ENCODE measurements at regions of chr9 and their contacts with region 1.

Region 1: DNA sequence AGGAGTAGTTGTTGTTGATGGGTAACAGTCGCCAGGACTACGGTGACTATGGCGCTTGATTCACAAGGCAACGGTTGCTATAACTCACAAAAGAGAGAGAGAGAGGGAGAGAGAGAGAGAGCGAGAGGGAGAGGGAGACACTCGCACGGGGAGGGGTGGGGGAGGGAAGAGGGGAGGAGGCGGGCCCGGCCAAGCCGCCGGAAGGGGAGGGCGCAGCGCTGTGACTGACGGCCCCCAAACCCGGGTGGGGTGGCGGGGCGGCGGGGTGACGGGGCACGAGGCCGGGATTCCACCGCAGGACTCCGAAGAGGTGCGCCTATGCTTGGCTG is at the start of gene RFX3:
- DNase-seq: peak; percentile 96
- H3K4me3 ChIP-seq: peak within 1 kb of the TSS; percentile 91
- H3K27ac ChIP-seq: peak within 1 kb of the TSS; percentile 100
- H3K4me1 ChIP-seq: peaks cover 50% of the 10 kb centered on the region
- H3K27me3 ChIP-seq: no peaks in the 10 kb centered on the region
- CTCF ChIP-seq: no peak
- total RNA-seq, gene RFX3: 7.4 and 11.6 TPM in 2 replicates

Region 2: GRCh38 chr9:2849941-2850340 is 675.9 kb before region 1 on chr9:
- CTCF ChIA-PET with region 1: no interaction called
- POLR2A ChIA-PET with region 1: no interaction called
- intact Hi-C with region 1: loop called (anchors 10 kb)
- DNase-seq: no peak
- H3K4me3 ChIP-seq: no peak overlapping the region
- H3K27ac ChIP-seq: no peak overlapping the region
- H3K4me1 ChIP-seq: no peaks in the 10 kb centered on the region
- H3K27me3 ChIP-seq: peaks cover 13% of the 10 kb centered on the region
- CTCF ChIP-seq: no peak

Region 3: DNA sequence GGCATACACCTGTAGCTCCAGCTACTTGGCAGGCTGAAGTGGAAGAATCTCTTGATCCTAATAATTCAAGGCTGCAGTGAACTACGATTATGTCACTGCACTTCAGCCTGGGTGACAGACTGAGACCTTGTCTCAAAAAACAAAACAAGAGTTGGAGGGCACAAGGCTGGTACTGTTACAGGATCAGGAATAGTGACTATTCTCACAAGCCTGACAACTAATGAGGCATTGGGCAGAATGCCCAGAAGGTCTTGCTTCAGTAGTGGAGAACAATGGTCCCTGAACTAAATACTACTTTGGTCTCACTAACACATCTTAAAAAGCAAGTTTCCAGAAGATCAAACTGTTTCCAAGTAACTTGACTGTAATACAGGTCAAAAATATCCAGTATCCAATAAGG is 183.0 kb after region 1 on chr9:
- CTCF ChIA-PET with region 1: no interaction called
- POLR2A ChIA-PET with region 1: no interaction called
- intact Hi-C with region 1: no loop called
- DNase-seq: peak; percentile 88
- H3K4me3 ChIP-seq: no peak overlapping the region
- H3K27ac ChIP-seq: no peak overlapping the region
- H3K4me1 ChIP-seq: no peaks in the 10 kb centered on the region
- H3K27me3 ChIP-seq: peaks cover 10% of the 10 kb centered on the region
- CTCF ChIP-seq: no peak

Region 4: DNA sequence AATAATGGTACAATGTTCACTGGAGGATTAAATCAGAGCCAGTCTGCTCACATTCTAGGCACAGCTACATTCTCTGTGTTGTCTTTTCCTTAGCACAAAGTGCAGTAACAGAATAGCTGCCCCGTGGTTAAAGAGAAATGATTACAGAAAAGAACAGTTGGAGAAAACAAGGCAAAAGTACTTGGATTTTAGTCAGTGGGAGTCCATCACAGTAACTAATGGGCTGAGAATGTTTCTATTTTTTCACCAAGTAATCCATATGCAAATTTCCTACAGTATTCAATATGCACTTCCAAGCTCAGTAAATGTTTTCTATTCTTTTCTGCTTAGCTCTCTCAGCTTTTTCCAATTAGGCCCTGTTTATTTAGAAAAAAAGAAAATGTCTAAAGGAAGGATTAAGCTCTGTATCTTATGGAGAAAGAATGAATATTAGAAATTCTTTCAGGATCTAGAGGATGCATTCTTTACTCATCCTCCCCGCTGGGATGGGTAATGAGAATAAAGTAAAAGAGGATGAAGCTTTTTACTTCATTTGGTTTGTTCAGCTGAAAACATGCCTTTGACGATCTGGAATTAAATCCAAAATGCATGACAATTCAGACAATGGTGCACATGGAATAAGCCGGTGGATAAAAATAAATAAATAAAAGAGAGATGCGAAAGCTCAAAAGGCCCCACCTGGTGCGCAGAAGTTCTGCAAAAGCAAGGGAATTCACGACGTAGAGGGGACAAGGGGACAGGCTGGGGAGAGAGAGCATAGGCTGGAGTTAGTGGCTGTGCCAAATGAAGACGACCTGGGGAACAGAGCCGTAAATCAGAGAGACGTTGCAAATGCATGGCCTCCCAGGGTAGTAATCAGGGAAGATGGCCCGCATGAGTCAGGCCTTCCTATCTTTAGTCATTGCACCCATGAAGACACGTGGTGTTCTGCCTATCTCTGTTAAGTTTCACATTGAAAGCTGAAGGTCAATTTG is 428.8 kb after region 1 on chr9:
- CTCF ChIA-PET with region 1: no interaction called
- POLR2A ChIA-PET with region 1: no interaction called
- intact Hi-C with region 1: loop called (anchors 10 kb)
- DNase-seq: peak; percentile 89
- H3K4me3 ChIP-seq: no peak overlapping the region
- H3K27ac ChIP-seq: peak overlapping the region; percentile 62
- H3K4me1 ChIP-seq: peaks cover 49% of the 10 kb centered on the region
- H3K27me3 ChIP-seq: no peaks in the 10 kb centered on the region
- CTCF ChIP-seq: no peak

Measured in A673 (cell line).